CD14-positive monocyte (primary cell): ENCODE measurements at regions of chr14 and their contacts with region 1.

Region 1: DNA sequence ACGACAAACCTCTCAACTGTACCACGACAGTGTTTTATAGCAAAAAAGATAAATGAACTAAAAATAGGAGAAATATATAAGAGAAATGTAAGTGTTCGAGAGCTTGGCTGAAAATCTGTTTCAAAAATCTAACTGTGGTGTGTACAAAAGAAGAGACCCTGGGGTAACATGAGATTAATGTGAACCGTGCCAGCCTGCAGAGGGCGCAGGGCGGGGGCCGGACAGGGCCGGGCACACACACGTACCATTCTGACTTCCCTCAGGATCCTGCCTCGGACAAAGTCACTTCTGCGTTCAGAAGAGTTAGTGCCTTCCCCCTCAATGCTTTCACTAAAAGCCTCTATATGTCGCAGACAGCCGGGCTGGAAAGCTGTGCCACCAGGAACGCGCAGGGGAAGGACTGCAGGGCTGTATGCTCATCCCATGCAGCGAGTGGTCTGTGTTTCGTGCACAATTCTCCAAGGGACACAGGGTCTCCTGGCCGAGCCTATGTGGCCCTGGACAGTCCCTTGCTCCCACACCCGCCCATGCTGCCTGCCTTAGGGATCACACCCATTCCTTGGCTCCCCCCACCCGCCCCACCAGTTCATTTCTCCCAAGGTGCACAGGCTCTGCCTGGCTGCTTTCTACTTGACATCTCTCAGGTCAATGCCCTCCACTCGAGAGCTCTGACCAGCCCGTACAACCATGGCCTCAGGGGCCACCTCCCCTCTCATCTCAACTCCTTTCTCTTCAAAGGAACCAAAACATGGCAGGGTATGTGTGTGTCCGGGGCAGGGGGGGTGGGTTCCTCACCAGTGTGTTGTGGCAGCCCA is 8.5 kb downstream of the CDCA4 start:
- DNase-seq: peak; percentile 20 to 37 (median 32)
- H3K4me3 ChIP-seq: no peak overlapping the region
- H3K4me3 Mint-ChIP-seq: no peak overlapping the region
- H3K27ac ChIP-seq: peak overlapping the region in 1 of 2 donors; percentile 12
- H3K27ac Mint-ChIP-seq: peak overlapping the region in 4 of 7 donors; percentile 58 to 81 (median 73)
- H3K4me1 ChIP-seq: peaks cover 0 to 20% of the 10 kb centered on the region in 2 donors
- H3K4me1 Mint-ChIP-seq: peaks cover 45% of the 10 kb centered on the region
- H3K27me3 ChIP-seq: no peaks in the 10 kb centered on the region
- H3K27me3 Mint-ChIP-seq: peaks cover 0 to 4% (median 0%) of the 10 kb centered on the region in 3 donors
- CTCF ChIP-seq: peak; percentile 43

Region 2: DNA sequence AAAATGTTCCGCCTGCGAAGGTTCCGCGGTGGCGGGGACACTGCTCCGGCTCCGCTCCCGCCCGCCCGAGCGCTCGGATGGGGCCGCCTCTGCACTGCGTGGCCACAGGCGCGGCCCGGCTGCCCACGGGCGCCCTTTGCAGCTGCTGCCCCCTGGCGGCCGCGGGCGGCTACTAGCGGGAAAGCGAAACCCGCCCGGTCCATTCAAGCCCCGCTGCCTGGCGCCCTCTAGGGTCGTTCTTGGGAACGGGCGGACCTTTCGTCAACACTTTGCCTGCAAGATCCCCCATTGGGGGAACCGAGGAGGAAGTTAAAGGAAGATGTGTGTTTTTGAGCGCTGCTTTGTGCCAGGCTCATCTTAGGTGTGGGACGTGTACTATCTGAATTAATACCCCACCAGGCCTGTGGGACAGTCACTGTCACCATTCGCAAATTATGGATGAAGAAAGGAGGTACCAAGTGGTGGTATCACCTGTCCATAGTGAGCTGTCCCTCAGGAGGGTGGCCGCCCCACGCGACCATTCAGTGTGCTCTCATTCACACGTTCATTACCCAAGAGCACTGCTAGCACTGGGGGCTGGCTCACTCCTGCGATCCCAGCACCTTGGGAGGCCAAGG is 33.4 kb after region 1 on chr14:
- intact Hi-C with region 1: loop called in 1 of 2 experiments (anchors 5 kb)
- DNase-seq: peak; percentile 90 to 94 (median 91)
- H3K4me3 ChIP-seq: peak overlapping the region in 1 of 3 experiments; percentile 14
- H3K4me3 Mint-ChIP-seq: peak overlapping the region in 1 of 2 donors; percentile 51
- H3K27ac ChIP-seq: peak overlapping the region; percentile 21 to 38
- H3K27ac Mint-ChIP-seq: peak overlapping the region in 5 of 7 donors; percentile 19 to 77 (median 25)
- H3K4me1 ChIP-seq: peaks cover 32 to 38% of the 10 kb centered on the region in 2 donors
- H3K4me1 Mint-ChIP-seq: peaks cover 24% of the 10 kb centered on the region
- H3K27me3 ChIP-seq: no peaks in the 10 kb centered on the region
- H3K27me3 Mint-ChIP-seq: peaks cover 0 to 6% (median 2%) of the 10 kb centered on the region in 3 donors
- CTCF ChIP-seq: peak; percentile 100